Gastrocnemius medialis (tissue), 4 donors: ENCODE measurements at regions of chr5 and their contacts with region 1.

Region 1: DNA sequence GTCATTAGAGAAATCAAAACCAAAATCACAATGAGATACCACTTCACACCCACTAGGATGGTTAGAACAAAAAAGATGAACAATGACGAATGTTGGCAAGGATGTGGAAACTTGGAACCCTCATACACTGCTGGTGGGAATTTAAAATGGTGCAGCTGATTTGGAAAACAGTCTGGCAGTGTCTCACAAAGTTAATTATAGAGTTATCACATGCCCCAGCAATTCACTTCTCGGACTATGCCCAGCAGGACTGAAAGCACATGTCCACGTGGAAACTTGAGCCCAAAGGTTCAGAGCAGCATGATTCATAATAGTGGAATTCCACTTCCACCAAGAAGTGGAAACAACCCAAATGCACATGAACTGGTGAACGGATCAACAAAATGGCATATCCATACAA is 85.0 kb upstream of the HRH2 start:
- DNase-seq: peak; percentile 16 to 56
- ATAC-seq: peak; percentile 90 to 94
- H3K4me3 ChIP-seq: no peak overlapping the region
- H3K27ac ChIP-seq: peak overlapping the region; percentile 27 to 68 (median 59)
- H3K4me1 ChIP-seq: peaks cover 0 to 5% of the 10 kb centered on the region in 2 donors
- H3K27me3 ChIP-seq: no peaks in the 10 kb centered on the region
- CTCF ChIP-seq: no peak
- POLR2A ChIP-seq: no peak

Region 2: DNA sequence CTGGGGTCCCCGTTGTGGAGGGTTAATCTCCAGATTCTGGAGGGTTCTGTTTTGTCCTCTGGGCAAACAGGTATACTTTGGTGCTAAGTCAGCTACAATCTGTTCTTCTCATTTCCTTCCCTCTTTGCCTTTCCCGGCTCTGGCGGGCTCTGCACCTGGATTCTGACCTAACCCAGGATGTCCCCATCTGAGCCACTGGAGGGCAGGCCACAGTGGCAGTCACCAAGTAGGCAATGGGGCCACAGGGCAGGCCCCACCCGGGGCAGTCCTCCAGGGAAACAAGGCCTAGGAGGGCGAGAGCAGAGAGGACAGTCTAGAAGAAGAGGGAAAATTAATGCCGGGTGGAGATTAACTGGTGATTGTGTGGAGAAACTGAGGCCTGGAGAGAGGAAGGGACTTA is 44.6 kb after region 1 on chr5:
- in situ Hi-C with region 1: no loop called
- intact Hi-C with region 1: no loop called
- DNase-seq: no peak
- ATAC-seq: no peak
- H3K4me3 ChIP-seq: no peak overlapping the region
- H3K27ac ChIP-seq: no peak overlapping the region
- H3K4me1 ChIP-seq: no peaks in the 10 kb centered on the region
- H3K27me3 ChIP-seq: no peaks in the 10 kb centered on the region
- CTCF ChIP-seq: no peak
- POLR2A ChIP-seq: no peak

Region 3: DNA sequence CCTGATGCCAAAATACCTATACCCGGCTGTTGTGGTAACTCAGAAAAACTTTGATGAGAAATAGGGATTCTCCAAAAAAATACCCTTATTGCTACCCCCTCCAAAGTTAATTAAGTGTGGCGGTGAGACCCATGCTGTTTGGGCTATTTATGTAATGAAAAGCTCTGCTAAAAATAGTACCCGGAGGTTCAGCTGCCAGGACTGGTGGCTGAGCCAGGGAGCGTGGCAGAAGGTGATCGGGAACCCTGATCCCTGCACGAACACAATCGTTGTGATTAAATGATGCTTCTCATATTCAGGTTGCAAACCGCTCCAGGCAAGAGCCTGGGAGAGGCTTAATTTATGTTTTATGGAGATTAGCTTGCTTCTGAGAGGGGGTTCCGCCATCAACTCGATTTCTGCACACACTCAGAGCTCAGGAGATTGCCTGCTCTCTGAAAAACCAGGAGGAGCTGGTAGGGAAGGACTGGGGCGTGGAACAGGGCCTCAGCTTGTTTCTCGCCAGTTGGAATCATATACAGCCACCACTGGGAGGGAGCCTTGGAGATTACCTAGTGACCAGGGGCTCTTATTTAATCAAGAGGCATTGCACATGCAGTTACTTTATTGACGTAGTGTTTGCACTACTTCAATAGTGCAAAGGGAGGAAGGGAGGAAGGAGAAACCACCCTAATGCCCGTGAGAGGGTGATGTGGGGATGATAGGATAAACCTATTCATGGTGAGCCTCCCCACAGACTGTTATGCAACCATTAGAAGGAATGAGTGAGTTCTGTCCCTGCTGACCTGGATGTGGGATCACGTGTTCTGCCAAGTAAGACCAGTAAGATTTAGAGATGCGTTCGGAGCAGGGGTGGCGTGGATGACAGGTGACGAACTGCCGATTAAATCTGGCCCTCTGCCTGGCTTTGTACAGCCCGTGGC is 108.4 kb after region 1 on chr5:
- in situ Hi-C with region 1: no loop called
- intact Hi-C with region 1: loop called (anchors 5 kb)
- DNase-seq: no peak
- ATAC-seq: peak; percentile 29 to 58
- H3K4me3 ChIP-seq: peak overlapping the region in 2 of 4 donors; percentile 5 to 28
- H3K27ac ChIP-seq: peak overlapping the region in 1 of 4 donors; percentile 16
- H3K4me1 ChIP-seq: peaks cover 19 to 20% of the 10 kb centered on the region in 2 donors
- H3K27me3 ChIP-seq: no peaks in the 10 kb centered on the region
- CTCF ChIP-seq: no peak
- POLR2A ChIP-seq: no peak

Region 4: GRCh38 chr5:176157656-176158055 is 584.8 kb after region 1 on chr5:
- in situ Hi-C with region 1: no loop called
- intact Hi-C with region 1: no loop called
- DNase-seq: no peak
- ATAC-seq: no peak
- H3K4me3 ChIP-seq: no peak overlapping the region
- H3K27ac ChIP-seq: no peak overlapping the region
- H3K4me1 ChIP-seq: no peaks in the 10 kb centered on the region
- H3K27me3 ChIP-seq: peaks cover 0 to 11% (median 4%) of the 10 kb centered on the region in 3 donors
- CTCF ChIP-seq: no peak
- POLR2A ChIP-seq: no peak